Gastrocnemius medialis (tissue), 4 donors: ENCODE measurements at regions of chr19 and their contacts with region 1.

Region 1: DNA sequence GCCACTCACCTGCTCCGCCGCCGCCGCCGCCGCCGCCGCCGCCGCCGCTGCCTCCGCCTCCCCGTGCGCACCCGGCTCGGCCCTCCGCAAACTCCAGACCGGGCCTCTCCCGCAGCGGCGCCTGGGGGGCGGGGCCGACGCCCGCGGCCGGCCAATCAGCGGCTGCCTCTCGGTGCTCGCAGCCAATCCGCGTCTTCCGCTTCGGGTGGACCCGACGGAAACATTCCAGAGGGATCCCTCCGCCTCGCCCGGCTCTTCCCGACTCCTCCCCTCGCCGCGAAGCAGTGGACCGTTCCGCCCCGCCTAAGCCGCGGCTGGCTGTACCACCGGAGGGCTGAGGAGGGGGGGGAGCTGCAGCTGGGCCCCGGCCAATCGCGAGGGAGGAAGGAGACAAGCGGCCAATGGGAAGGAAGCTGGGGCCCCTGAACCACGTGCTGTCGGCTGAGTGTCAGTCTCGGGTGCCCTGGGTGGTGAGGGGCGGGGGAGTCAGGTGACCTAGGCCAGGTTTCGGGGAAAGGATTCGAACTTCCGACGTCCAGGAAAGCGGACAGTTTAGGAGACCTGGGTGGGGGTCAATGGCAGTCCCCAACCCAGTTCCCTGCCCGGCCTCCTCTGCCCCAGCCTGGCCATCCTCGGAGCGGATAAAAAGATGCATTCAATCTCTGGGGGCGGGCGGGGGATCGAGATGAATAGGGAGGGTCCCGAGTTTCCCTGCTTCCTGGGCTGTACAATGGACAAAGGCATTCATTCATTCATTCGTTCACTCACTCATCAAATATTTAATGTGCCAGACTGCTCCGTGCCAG is at the start of gene GIPC1:
- DNase-seq: peak; percentile 92 to 95
- ATAC-seq: peak; percentile 93 to 94
- H3K4me3 ChIP-seq: peak within 1 kb of the TSS; percentile 74 to 84 (median 80)
- H3K27ac ChIP-seq: peak within 1 kb of the TSS; percentile 72 to 82 (median 74)
- H3K4me1 ChIP-seq: peaks cover 6 to 18% of the 10 kb centered on the region in 2 donors
- H3K27me3 ChIP-seq: no peaks in the 10 kb centered on the region
- CTCF ChIP-seq: peak in 2 of 5 experiments; percentile 5 to 22
- POLR2A ChIP-seq: peak; percentile 46 to 49
- total RNA-seq, gene GIPC1: 18.4 to 70.3 (median 54.7) TPM

Region 2: DNA sequence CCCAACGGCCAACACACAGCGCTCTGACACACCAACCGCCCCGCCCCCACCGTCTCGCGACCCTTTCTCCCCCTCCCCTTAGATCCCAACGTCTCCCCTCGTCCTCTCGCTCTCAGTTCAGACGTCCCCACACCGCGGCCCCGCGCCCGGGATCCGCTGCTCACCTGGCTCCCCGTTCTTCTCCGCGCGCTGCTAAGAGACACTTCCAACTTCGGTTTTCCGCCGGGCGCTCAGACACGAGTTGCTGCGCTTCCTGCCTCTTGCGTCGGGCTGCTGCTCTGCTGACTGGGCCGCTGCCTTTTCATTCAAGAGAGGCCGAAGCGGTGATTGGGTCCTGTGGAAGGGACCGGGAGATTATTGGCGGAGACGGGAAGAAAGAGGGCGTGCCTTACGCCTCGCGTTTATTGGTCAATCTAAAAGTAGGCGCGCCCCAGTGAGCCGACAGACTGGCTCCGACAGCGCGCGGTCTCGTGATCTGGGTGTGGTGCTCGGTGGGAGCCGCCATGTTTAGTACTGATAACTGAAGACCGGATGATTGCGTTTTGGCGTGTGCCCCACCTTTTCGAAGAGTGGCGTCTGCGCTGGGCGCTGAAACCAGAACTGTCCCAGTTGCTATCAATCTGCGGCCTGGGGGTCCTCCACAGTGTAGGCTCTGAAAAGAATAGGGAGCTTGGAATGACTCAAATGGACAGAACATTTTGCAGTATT is 77.0 kb before region 1 on chr19 and contains the start of gene DDX39A:
- in situ Hi-C with region 1: no loop called
- intact Hi-C with region 1: loop called (anchors 1 kb)
- DNase-seq: peak; percentile 99
- ATAC-seq: peak; percentile 100
- H3K4me3 ChIP-seq: peak within 1 kb of the TSS; percentile 86 to 95 (median 89)
- H3K27ac ChIP-seq: peak within 1 kb of the TSS; percentile 93 to 98 (median 96)
- H3K4me1 ChIP-seq: peaks cover 18% of the 10 kb centered on the region in 2 donors
- H3K27me3 ChIP-seq: no peaks in the 10 kb centered on the region
- CTCF ChIP-seq: peak in 1 of 5 experiments; percentile 11
- POLR2A ChIP-seq: peak; percentile 92 to 93
- total RNA-seq, gene DDX39A: 23.9 to 59.2 (median 41.3) TPM

Region 3: GRCh38 chr19:14529254-14530004 is 33.2 kb after region 1 on chr19 and contains the start of gene TECR:
- in situ Hi-C with region 1: no loop called
- intact Hi-C with region 1: loop called (anchors 1 kb)
- DNase-seq: peak; percentile 100
- ATAC-seq: peak; percentile 96
- H3K4me3 ChIP-seq: peak within 1 kb of the TSS; percentile 80 to 98 (median 84)
- H3K27ac ChIP-seq: peak within 1 kb of the TSS; percentile 95 to 98 (median 98)
- H3K4me1 ChIP-seq: peaks cover 24 to 37% of the 10 kb centered on the region in 2 donors
- H3K27me3 ChIP-seq: no peaks in the 10 kb centered on the region
- CTCF ChIP-seq: no peak
- POLR2A ChIP-seq: peak; percentile 96 to 97
- total RNA-seq, gene TECR: 56.2 to 155 (median 113) TPM